Psoas muscle (tissue), 8 donors: ENCODE measurements at regions of chr1 and their contacts with region 1.

Region 1: DNA sequence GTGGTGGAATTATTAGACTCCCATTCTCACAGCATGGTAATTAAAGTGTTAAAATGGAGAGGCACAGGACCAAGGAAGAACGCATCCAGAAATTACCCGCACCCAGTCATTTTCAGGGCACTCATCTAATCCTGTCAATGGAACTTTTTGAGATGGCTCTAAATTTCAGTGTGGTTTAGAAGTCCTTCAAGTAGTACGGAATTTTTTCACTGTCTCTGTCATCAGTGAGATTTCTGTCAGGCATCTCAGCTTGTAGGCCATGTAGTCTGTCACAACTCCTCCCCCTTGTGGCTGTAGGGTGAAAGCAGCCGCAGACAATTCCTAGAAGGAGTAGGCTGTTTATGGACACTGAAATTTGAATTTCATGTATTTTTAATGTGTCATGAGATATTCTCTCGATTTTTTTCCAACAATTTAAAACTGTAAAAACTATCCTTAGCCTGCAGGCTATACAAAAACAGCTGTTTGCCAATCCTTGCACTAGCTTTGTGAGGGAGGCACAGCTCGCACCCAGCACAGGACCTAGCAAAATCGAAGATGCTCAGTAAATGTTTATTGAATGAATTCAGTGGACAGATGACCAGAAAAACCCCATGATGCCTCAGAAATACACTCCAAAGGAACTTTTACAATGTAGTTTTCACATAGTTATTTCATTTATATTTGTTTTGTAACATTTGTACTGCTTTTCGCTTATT is 6.6 kb upstream of the NUP133 start:
- DNase-seq: peak; percentile 44 to 60
- ATAC-seq: peak; percentile 69 to 96 (median 90)
- H3K4me3 ChIP-seq: no peak overlapping the region
- H3K27ac ChIP-seq: no peak overlapping the region
- H3K4me1 ChIP-seq: no peaks in the 10 kb centered on the region
- H3K27me3 ChIP-seq: no peaks in the 10 kb centered on the region
- CTCF ChIP-seq: peak; percentile 81

Region 2: DNA sequence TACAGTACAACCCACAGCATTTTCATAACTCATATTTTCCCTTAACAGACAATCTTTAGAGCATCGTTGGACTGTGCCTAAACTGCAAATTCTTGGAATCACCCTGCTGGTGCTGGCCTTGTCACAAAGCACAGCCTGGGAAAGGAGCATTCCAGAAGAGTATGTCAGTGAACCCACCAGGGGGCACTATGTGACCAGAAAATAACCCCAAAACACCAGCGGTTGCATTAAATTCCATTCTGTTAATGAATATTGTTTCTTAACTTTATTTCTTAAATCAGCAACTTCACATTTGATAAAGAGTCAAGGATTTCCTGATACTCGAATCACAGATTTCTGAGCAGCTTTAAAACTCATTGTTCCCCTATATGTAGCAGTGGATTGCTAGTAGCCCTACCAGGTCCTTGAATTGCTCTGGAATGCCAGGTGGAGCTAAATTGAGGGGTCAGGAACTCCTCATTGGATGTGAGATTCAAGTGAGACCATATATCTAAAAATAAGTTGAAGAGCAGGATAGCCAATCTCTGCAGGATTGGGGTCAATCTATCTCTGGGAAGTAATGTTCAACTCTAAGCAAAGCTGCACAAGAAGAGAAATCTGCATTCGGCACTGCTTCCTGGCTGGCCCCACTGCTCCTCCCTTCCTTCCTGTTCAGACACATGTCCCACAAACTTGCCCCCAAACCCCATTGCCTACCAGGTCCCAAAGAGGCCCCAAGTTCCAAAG is 256.5 kb before region 1 on chr1:
- intact Hi-C with region 1: loop called (anchors 2 to 10 kb)
- DNase-seq: peak in 1 of 2 donors; percentile 39
- ATAC-seq: peak; percentile 83 to 89 (median 84)
- H3K4me3 ChIP-seq: no peak overlapping the region
- H3K27ac ChIP-seq: no peak overlapping the region
- H3K4me1 ChIP-seq: no peaks in the 10 kb centered on the region
- H3K27me3 ChIP-seq: no peaks in the 10 kb centered on the region
- CTCF ChIP-seq: peak; percentile 90

Region 3: GRCh38 chr1:229270547-229271447 is 243.9 kb before region 1 on chr1 and contains the start of gene RAB4A:
- intact Hi-C with region 1: loop called in 1 of 2 experiments (anchors 10 kb)
- DNase-seq: peak; percentile 90 to 94
- ATAC-seq: peak; percentile 94 to 96 (median 96)
- H3K4me3 ChIP-seq: peak within 1 kb of the TSS; percentile 79
- H3K27ac ChIP-seq: peak within 1 kb of the TSS; percentile 77
- H3K4me1 ChIP-seq: peaks cover 46% of the 10 kb centered on the region
- H3K27me3 ChIP-seq: no peaks in the 10 kb centered on the region
- CTCF ChIP-seq: no peak
- total RNA-seq, gene RAB4A: 44.2 to 67.4 (median 54.3) TPM